ENCODE measurements at regions of chr14 and their contacts with region 1.

Region 1: GRCh38 chr14:70366911-70367310 is 7.4 kb upstream of the COX16 start:
- DNase-seq: no peak
- H3K4me3 ChIP-seq: no peak overlapping the region
- H3K27ac ChIP-seq: no peak overlapping the region
- H3K4me1 ChIP-seq: no peaks in the 10 kb centered on the region
- H3K27me3 ChIP-seq: no peaks in the 10 kb centered on the region
- CTCF ChIP-seq: no peak

Region 2: DNA sequence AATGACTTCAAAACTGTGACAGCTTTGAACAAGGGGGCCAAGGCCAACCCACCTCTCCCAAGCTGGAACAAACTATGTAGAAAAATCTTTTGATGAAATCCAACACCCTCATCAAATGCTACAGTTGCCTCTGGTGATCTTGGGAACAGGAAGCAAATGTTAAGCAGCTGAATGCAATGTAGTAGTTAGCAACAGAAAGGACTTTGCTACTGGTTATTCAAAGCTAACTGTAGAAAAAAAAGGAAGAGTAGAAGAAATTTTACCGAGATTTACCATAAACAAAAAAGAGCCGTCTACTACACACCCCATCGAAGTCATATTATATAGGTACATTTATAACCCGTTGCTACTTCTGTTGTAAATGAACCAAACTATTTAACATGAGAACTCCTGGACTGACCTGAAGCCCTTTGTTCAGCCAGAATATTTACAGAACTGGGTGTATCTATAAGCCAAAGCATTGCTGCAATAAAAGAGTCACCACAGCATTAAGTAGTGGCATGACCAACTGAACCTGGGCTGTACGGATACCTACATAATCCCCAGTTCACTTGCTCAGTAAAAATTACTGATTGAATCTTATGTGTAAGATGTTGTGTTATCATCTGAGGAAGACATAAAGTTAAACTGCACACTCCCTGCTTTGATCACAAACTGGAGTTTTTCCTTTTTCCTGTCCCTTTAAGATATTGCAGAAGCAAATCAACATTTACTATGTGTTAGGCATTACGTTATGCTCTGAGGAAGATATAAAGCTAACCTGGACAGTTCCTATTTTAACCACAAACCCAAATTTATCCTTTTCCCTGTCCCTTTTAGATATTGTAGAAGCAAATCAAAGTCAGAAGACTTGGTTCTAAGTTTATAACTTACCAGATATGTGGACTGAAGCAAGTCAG is 24.8 kb after region 1 on chr14:
- intact Hi-C with region 1: loop called (anchors 1 kb)
- DNase-seq: no peak
- H3K4me3 ChIP-seq: no peak overlapping the region
- H3K27ac ChIP-seq: no peak overlapping the region
- H3K4me1 ChIP-seq: no peaks in the 10 kb centered on the region
- H3K27me3 ChIP-seq: no peaks in the 10 kb centered on the region
- CTCF ChIP-seq: no peak

Region 3: GRCh38 chr14:70472253-70473159 is 105.6 kb after region 1 on chr14:
- intact Hi-C with region 1: no loop called
- DNase-seq: no peak
- H3K4me3 ChIP-seq: no peak overlapping the region
- H3K27ac ChIP-seq: no peak overlapping the region
- H3K4me1 ChIP-seq: no peaks in the 10 kb centered on the region
- H3K27me3 ChIP-seq: no peaks in the 10 kb centered on the region
- CTCF ChIP-seq: no peak